ENCODE measurements at regions of chr2 and their contacts with region 1.

Region 1: DNA sequence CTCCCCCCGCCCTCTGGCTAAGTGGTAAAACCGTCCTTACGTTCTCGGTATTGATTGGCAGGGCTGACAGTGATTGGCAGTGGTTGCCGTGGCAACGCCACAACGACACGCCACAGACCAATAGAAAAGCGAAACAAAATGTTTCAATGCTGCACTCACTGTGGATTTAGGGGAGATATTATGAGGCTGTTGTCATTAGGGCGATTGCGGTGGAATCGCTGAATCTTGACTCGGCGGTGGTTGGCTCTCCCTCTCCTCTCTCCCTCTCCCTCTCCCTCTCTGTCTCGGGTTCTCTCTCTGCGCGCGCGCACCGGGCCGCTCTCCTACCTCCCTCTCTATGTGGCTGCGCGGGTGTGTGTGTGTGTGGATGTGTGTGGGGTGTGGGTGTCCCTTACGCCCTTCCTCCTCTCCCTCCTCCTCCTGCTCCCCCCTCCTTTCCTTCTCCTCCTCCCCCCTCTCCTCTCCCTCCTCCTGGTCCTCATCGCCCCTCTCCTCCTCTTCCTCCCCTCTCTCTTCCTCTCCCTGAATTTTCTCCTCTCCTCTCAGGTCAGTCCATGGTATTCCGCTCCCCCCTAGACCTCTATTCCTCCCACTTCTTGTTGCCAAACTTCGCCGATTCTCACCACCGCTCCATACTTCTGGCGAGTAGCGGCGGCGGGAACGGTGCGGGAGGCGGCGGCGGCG is at the start of gene SIX3:
- DNase-seq: peak; percentile 37
- H3K4me3 ChIP-seq: peak within 1 kb of the TSS in 2 of 3 experiments; percentile 2 to 21
- H3K27ac ChIP-seq: no peak within 1 kb of the TSS
- H3K4me1 ChIP-seq: no peaks in the 10 kb centered on the region
- H3K27me3 ChIP-seq: peaks cover 82 to 97% of the 10 kb centered on the region in 2 experiments
- CTCF ChIP-seq: no peak
- POLR2A ChIP-seq: no peak
- total RNA-seq, gene SIX3: not detected in 2 replicates

Region 2: DNA sequence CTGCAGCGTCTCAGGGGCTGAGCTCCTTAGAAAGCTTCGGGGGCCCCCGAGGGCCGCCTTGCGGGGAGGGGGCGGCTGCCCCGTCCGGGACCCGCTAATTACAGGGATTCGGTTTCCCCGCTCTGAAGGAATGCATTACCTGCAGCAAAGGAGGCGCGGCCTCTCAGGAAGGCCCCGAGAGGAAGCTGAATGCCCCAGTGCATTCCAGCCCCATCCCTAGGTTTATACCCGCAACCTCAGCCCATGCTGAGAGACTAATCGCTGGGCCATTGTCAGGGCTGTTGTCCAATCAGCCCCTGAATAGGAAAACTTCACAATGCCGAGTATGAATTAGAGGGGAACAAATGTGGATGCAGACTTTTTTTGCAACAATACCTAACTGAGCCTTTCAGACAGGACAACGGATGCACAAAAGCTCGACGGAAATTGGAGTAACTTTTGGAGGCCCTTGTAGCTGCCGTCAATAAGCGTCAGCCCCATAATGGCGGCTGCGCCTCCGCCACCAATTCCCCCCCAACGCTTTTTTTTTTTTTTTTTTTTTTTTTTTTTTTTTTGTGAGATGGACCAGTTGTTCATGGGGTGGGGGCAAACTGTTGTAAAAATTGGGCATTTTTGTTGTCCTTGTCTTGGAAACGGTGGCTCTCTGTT is 138.8 kb before region 1 on chr2:
- CTCF ChIA-PET with region 1: interaction called, 3 read pairs
- POLR2A ChIA-PET with region 1: no interaction called
- dilution Hi-C with region 1: no loop called
- intact Hi-C with region 1: loop called (anchors 5 kb)
- DNase-seq: no peak
- H3K4me3 ChIP-seq: peak overlapping the region in 1 of 3 experiments; percentile 64
- H3K27ac ChIP-seq: no peak overlapping the region
- H3K4me1 ChIP-seq: peaks cover 17% of the 10 kb centered on the region
- H3K27me3 ChIP-seq: peaks cover 68 to 95% of the 10 kb centered on the region in 2 experiments
- CTCF ChIP-seq: no peak
- POLR2A ChIP-seq: no peak

Region 3: DNA sequence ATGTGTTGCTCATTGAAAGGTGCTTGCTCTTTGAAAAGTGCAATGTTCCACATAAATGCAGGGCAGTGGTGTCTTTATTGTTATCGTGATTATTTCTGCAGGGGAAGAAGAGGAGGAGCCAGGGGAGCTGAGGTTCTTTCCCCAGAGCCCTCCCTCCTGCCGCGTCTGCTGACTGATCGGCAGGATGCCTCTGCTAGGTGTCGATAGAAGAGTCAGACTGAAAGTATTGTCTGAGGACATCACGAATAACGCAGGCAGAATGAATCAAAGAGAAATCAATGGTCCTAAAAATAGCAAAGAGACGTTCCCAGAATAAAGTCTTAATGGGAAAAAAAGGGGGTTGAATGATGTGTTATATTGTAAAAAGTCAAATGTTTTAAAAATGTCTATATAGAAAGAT is 47.6 kb before region 1 on chr2:
- CTCF ChIA-PET with region 1: no interaction called
- POLR2A ChIA-PET with region 1: no interaction called
- dilution Hi-C with region 1: no loop called
- intact Hi-C with region 1: no loop called
- DNase-seq: no peak
- H3K4me3 ChIP-seq: no peak overlapping the region
- H3K27ac ChIP-seq: no peak overlapping the region
- H3K4me1 ChIP-seq: no peaks in the 10 kb centered on the region
- H3K27me3 ChIP-seq: no peaks in the 10 kb centered on the region
- CTCF ChIP-seq: no peak
- POLR2A ChIP-seq: no peak

Region 4: GRCh38 chr2:45102141-45102540 is 160.4 kb after region 1 on chr2:
- CTCF ChIA-PET with region 1: no interaction called
- POLR2A ChIA-PET with region 1: no interaction called
- dilution Hi-C with region 1: no loop called
- intact Hi-C with region 1: no loop called
- DNase-seq: no peak
- H3K4me3 ChIP-seq: no peak overlapping the region
- H3K27ac ChIP-seq: no peak overlapping the region
- H3K4me1 ChIP-seq: no peaks in the 10 kb centered on the region
- H3K27me3 ChIP-seq: peaks cover 0 to 2% of the 10 kb centered on the region in 2 experiments
- CTCF ChIP-seq: no peak
- POLR2A ChIP-seq: no peak

Region 5: GRCh38 chr2:45220227-45220626 is 278.5 kb after region 1 on chr2:
- CTCF ChIA-PET with region 1: no interaction called
- POLR2A ChIA-PET with region 1: no interaction called
- dilution Hi-C with region 1: no loop called
- intact Hi-C with region 1: no loop called
- DNase-seq: no peak
- H3K4me3 ChIP-seq: no peak overlapping the region
- H3K27ac ChIP-seq: no peak overlapping the region
- H3K4me1 ChIP-seq: peaks cover 4% of the 10 kb centered on the region
- H3K27me3 ChIP-seq: no peaks in the 10 kb centered on the region
- CTCF ChIP-seq: no peak
- POLR2A ChIP-seq: no peak

Measured in endothelial cell of umbilical vein (primary cell).